Panc1 (cell line): ENCODE measurements at regions of chr1 and their contacts with region 1.

Region 1: GRCh38 chr1:228131766-228132165 is 8.3 kb upstream of the GUK1 start:
- DNase-seq: no peak
- ATAC-seq: no peak
- H3K4me3 ChIP-seq: no peak overlapping the region
- H3K27ac ChIP-seq: no peak overlapping the region
- H3K4me1 ChIP-seq: 0 out of 2 replicates have a peak, but pooled peaks cover 2% of the 10 kb centered on the region
- H3K27me3 ChIP-seq: peaks cover 7% of the 10 kb centered on the region; the same call in 1 of the 2 replicates
- CTCF ChIP-seq: no peak

Region 2: DNA sequence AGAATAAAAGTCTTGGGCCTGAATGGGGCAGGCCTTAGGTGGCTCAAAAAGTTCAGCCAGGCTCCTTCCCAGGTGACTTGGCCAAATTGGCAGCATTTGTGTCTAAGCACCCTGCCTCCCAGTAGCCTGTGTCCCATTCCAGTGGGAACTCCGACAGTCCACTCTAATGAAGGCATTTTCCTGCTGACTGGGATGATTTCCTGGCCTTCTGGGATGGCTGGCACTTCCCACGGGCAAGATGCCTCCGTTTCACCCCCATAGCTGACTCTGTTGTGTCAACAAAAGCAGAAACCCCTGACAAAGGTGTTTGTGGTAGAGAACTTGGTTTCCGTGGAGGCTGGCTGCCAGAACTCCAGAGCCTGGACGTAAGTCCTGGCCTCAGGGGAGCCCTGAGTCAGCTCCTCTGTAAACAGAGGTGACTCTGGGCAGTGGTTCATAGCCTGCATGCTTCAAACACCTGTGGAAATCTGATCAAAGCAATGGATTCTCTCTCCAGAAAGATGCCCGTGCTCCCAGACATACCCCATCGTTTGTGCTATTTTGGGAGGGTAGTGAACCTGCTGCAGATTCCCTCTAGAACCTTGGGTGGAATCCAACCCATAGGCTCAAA is 88.4 kb before region 1 on chr1:
- CTCF ChIA-PET with region 1: no interaction called
- POLR2A ChIA-PET with region 1: no interaction called
- in situ Hi-C with region 1: no loop called
- intact Hi-C with region 1: no loop called
- DNase-seq: no peak
- ATAC-seq: peak; percentile 83
- H3K4me3 ChIP-seq: no peak overlapping the region
- H3K27ac ChIP-seq: no peak overlapping the region
- H3K4me1 ChIP-seq: peaks cover 3% of the 10 kb centered on the region; the same call in 1 of the 2 replicates
- H3K27me3 ChIP-seq: no peaks in the 10 kb centered on the region
- CTCF ChIP-seq: no peak

Region 3: DNA sequence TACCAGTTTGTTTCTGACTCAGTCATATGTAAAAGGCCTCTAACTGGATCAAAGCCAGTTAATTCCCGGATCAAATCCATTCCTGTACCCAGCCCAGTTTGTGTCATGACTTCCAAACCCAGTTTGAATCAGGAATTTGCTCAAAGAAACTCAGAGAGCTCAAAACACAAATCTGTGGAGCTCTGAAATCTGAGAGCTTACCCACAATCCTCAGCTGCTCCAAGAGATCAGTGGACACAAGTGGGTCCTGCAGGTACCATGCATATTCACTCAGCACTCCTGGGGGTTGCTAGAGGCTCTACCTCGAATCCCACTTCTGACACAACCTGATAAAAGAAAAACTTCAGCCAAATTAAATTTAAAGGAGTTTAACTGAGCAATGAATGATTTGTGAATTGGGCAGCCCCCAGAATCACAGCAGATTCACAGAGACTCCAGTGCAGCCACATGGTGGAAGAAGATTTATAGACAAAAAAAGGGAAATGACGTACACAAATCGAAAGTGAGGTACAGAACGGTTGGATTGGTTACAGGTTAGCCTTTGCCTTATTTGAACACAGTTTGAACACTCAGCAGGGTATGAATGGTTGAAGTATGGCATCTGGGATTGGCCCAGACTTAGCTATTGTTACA is 10.8 kb before region 1 on chr1:
- CTCF ChIA-PET with region 1: interaction called, 14 read pairs
- POLR2A ChIA-PET with region 1: no interaction called
- in situ Hi-C with region 1: no loop called
- intact Hi-C with region 1: no loop called
- DNase-seq: no peak
- ATAC-seq: no peak
- H3K4me3 ChIP-seq: no peak overlapping the region
- H3K27ac ChIP-seq: no peak overlapping the region
- H3K4me1 ChIP-seq: no peaks in the 10 kb centered on the region
- H3K27me3 ChIP-seq: no peaks in the 10 kb centered on the region; the same call in 1 of the 2 replicates
- CTCF ChIP-seq: no peak

Region 4: DNA sequence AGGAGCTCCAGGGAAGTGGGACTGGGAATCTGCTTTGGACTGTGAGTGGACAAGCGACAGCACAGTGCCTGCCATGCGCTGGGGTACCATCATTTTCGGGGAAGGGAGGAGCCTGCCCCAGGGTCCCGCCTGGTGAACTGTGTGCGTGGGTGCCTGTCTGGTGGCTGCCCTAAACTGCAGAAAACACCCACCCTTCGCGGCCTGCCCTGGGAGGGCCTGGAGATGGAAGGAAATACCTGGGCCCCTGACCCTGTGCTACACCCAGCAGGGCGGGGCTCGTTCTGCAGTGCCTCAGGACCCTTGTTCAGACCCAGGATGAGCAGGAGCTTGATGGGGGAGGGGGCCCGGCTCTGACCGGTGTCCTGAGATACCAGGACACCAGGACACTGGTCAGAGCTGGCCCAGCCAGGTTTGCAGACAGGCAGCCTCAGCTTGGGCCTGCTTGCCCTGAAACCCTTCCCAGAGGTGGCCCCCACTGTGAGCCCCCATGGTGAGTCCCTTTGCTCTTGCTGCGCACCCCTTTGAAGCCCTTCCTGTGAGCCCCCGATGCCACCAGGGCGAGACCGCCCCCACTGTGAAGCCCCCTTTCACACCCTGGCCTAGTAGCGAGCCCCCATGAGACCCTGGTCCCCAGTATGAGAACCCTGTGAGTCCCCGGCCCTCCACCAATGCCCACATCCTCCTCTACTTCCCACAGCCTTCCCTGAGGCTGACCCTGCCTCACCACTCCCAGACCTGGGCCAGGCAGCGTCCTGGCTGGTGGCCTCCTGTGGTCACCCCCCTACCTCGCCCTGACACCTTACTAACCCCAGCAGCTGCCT is 20.5 kb after region 1 on chr1:
- CTCF ChIA-PET with region 1: interaction called, 16 read pairs
- POLR2A ChIA-PET with region 1: no interaction called
- in situ Hi-C with region 1: no loop called
- intact Hi-C with region 1: no loop called
- DNase-seq: no peak
- ATAC-seq: no peak
- H3K4me3 ChIP-seq: no peak overlapping the region
- H3K27ac ChIP-seq: no peak overlapping the region
- H3K4me1 ChIP-seq: peaks cover 28% of the 10 kb centered on the region
- H3K27me3 ChIP-seq: no peaks in the 10 kb centered on the region
- CTCF ChIP-seq: no peak

Region 5: DNA sequence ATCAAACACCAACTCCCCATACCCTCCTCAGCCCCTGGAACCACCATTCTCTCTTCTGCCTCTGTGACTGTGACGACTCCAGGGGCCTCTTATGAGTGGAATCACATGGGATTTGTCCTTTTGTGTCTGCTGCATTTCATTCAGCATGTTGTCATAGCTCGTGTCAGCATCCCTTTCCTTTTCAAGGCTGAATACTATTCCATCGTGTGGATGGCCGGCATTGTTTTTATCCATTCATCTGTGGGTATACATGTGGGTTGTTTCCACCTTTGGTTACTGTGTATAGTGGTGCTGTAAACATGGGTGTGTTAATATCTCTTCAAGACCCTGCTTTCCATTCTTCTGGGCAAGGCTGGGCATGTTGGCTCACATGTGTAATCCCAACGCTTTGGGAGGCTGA is 59.0 kb after region 1 on chr1:
- CTCF ChIA-PET with region 1: interaction called, 3 read pairs
- POLR2A ChIA-PET with region 1: no interaction called
- in situ Hi-C with region 1: no loop called
- intact Hi-C with region 1: loop called (anchors 1 kb)
- DNase-seq: no peak
- ATAC-seq: no peak
- H3K4me3 ChIP-seq: no peak overlapping the region
- H3K27ac ChIP-seq: no peak overlapping the region
- H3K4me1 ChIP-seq: no peaks in the 10 kb centered on the region
- H3K27me3 ChIP-seq: no peaks in the 10 kb centered on the region
- CTCF ChIP-seq: no peak

Region 6: GRCh38 chr1:228226956-228227791 is 95.4 kb after region 1 on chr1:
- CTCF ChIA-PET with region 1: no interaction called
- POLR2A ChIA-PET with region 1: no interaction called
- in situ Hi-C with region 1: no loop called
- intact Hi-C with region 1: no loop called
- DNase-seq: no peak
- ATAC-seq: peak; percentile 84
- H3K4me3 ChIP-seq: no peak overlapping the region
- H3K27ac ChIP-seq: no peak overlapping the region
- H3K4me1 ChIP-seq: peaks cover 5% of the 10 kb centered on the region; the same call in 1 of the 2 replicates
- H3K27me3 ChIP-seq: no peaks in the 10 kb centered on the region
- CTCF ChIP-seq: peak; percentile 19; the same call in 1 of the 2 replicates